ENCODE measurements at regions of chr3 and their contacts with region 1.

Region 1: GRCh38 chr3:119891944-119892721 is 110.2 kb downstream of the NR1I2 start:
- DNase-seq: peak; percentile 46
- ATAC-seq: peak; percentile 71
- H3K4me3 ChIP-seq: no peak overlapping the region
- H3K27ac ChIP-seq: no peak overlapping the region
- H3K4me1 ChIP-seq: no peaks in the 10 kb centered on the region
- H3K27me3 ChIP-seq: no peaks in the 10 kb centered on the region
- CTCF ChIP-seq: peak; percentile 58 to 75 (median 73); a peak in 5 of 6 replicates
- POLR2A ChIP-seq: no peak
- RAD21 ChIP-seq: peak; percentile 84

Region 2: DNA sequence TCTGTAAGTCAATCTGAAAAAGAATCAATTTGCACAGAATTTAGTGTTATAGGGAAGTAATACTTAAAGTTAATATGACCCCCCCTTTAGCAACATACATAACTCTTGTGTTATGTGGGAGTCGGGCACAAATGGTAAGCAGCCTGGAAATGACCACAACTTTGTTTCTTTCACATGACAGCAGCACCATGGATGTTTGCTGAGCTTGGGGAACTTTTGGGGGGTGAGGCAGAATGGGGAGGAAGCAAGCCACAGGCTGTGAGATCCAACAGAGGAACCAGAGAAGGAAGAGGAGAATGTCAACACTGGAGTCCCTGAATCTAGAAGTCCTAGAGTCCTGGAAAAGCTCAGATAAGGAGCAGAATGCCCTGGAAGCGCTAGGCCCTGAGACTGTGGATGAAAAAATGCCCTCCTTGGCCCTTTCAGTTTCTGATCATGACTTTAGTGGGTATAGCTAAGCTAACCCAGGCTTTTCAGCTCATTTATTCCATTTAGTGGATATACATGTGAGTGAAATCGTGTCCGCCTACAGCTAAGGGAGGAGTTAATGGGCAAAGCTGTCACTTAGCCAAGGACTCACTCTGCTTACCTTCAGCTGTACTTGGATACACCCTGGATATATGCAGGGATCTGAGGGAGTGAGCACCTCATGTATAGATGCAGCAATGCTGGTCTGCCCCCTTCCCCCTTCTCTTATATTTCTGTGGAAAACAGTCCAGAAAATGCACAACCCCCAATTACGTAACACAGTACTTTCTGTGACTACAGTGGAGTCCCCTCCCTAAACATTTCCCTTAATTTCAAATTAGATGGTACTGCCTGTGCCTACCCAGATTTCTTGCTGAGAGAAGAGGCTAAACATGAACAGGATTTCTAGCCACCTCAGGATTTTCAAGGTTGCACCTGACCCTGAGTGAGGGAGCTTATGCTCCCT is 150.2 kb before region 1 on chr3:
- CTCF ChIA-PET with region 1: no interaction called
- POLR2A ChIA-PET with region 1: no interaction called
- RAD21 ChIA-PET with region 1: no interaction called
- intact Hi-C with region 1: no loop called
- DNase-seq: no peak
- ATAC-seq: no peak
- H3K4me3 ChIP-seq: no peak overlapping the region
- H3K27ac ChIP-seq: no peak overlapping the region
- H3K4me1 ChIP-seq: no peaks in the 10 kb centered on the region
- H3K27me3 ChIP-seq: no peaks in the 10 kb centered on the region
- CTCF ChIP-seq: no peak
- POLR2A ChIP-seq: no peak
- RAD21 ChIP-seq: no peak

Region 3: DNA sequence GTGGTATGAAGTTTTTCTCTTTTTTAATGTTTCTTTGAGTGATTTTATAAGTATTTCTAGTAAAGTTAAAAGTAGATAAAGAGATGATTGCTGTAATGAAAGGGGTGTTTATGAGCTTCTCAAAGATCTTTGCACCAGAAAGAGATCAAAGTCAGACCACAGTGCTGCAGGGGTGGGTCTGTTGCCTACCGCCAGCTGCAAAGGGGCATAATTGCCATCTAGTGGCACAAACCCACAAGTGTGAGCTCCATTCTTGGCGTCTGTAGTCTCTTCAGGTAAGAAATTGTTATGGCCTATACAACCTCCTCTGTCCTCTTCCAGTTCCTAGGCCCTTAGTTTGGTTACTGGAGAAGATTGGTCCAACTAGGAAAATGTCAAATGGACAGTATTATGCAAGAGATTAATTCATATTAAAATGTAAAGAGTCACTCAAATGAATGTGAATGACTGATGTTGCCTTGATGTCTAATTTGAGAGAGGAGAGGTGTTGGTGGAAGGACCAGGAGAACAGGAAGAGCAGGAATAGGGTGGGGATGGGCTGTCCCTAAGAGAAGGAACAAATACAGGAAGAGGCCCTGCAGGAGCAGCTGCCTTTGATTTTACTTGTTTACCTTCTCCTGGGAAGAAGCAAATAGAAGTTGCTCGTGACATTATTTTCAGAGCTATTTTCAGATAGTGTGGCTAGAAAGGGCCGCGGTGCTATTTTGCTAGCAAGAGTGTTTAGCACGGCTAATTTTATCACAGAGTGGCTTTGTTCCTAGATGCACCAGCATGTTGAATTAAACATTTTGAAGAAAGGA is 255.1 kb after region 1 on chr3:
- CTCF ChIA-PET with region 1: interaction called, 31 read pairs
- POLR2A ChIA-PET with region 1: no interaction called
- RAD21 ChIA-PET with region 1: interaction called in 1 of 2 experiments, 3 read pairs
- intact Hi-C with region 1: no loop called
- DNase-seq: no peak
- ATAC-seq: peak; percentile 63
- H3K4me3 ChIP-seq: no peak overlapping the region
- H3K27ac ChIP-seq: no peak overlapping the region
- H3K4me1 ChIP-seq: peaks cover 7 to 42% of the 10 kb centered on the region in 2 experiments
- H3K27me3 ChIP-seq: no peaks in the 10 kb centered on the region
- CTCF ChIP-seq: peak; percentile 46 to 60 (median 52); a peak in 5 of 6 replicates
- POLR2A ChIP-seq: no peak
- RAD21 ChIP-seq: peak; percentile 77

Region 4: GRCh38 chr3:120157113-120158070 is 265.3 kb after region 1 on chr3:
- CTCF ChIA-PET with region 1: no interaction called
- POLR2A ChIA-PET with region 1: no interaction called
- RAD21 ChIA-PET with region 1: no interaction called
- intact Hi-C with region 1: no loop called
- DNase-seq: no peak
- ATAC-seq: no peak
- H3K4me3 ChIP-seq: no peak overlapping the region
- H3K27ac ChIP-seq: no peak overlapping the region
- H3K4me1 ChIP-seq: peaks cover 0 to 5% of the 10 kb centered on the region in 2 experiments; a peak in 1 of 4 replicates
- H3K27me3 ChIP-seq: peaks cover 4% of the 10 kb centered on the region; the same call in 1 of the 2 replicates
- CTCF ChIP-seq: no peak
- POLR2A ChIP-seq: no peak
- RAD21 ChIP-seq: no peak

Region 5: DNA sequence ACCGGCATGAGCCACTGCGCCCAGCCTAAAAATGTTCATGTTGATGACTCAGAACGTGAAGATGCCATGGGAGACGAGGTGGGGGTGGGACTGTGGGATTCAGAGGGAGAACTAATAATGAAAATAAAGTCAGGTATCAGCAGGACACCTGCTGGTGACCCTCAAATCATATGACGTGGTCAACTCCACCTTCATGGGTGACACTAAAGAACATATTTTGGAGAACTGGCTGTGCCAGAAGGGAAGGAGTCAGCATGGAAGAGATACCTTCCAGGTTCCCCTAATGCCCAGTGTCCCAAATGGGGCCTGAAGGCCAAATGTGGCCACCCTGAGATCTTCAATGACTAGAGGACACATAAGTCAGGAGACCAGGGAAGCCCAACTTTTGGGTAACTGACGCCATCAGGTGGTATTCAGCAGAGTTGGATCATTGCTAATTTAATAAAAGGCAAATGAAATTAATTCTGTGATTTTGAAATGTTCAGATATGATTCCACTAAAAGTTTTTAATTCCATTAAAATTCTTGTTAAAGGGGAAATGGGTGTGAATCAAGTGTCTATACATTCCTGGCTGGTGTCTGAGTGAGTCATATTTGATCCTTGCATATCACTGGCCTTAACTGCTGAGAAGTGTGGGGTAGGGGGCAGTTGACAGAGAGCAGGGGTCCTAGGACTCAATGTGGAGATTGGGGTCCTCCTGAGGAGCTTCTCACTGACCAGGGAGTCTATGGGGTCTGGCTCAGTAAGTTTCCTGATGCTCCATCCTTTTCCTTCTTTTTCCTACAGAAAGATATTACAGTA is 290.8 kb after region 1 on chr3:
- CTCF ChIA-PET with region 1: interaction called, 6 read pairs
- POLR2A ChIA-PET with region 1: no interaction called
- RAD21 ChIA-PET with region 1: no interaction called
- intact Hi-C with region 1: loop called (anchors 1 kb)
- DNase-seq: peak; percentile 26
- ATAC-seq: peak; percentile 83
- H3K4me3 ChIP-seq: no peak overlapping the region
- H3K27ac ChIP-seq: no peak overlapping the region
- H3K4me1 ChIP-seq: peaks cover 0 to 5% of the 10 kb centered on the region in 2 experiments; a peak in 1 of 4 replicates
- H3K27me3 ChIP-seq: no peaks in the 10 kb centered on the region
- CTCF ChIP-seq: peak in 2 of 3 experiments; percentile 64 to 91; a peak in 4 of 6 replicates
- POLR2A ChIP-seq: no peak
- RAD21 ChIP-seq: peak; percentile 84